Ascending aorta (tissue), 2 donors: ENCODE measurements at regions of chr3 and their contacts with region 1.

Region 1: DNA sequence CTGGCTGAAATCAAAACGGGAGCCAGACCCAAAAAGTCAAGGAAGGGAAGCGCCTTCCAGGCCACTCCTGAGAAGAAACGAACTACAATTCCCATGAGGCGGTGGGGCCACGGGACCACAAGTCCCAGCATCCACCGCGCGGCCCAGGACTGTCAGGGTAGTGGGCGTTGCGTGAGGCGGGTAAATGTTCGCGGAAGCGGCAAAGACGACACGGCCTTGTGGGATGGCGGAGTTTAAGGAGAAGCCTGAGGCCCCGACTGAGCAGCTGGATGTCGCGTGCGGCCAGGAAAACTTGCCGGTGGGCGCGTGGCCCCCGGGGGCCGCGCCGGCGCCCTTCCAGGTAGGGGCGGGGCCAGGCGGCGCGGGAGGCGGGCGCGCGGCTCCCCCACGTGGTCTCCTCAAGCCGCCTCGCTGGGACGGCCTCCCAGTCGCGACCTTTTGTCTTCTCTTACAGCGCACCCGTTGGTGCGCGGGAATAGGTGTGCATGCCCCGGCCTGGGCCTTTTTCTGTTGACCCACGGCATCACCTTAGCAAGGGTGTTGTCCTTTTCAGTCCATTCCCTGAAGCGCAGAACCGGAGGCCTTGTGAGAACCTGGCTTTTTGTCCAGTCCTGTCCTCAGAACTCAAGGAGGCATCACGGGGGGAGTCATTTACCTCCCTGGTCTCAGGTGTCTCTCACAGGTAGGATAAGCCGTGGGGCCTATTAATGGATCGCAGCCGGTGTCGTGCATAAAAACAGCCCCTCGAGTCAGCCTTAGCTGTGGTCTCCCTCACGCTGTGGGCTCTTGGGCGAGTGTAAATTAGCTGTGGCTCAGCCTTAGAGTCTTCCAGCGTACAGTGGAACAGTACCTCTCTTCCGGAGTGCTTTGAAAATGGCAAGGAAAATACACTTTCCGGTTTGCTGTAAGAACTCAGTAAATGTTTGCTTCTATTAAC is at the start of gene SETMAR:
- DNase-seq: peak; percentile 75 to 97
- H3K4me3 ChIP-seq: peak within 1 kb of the TSS; percentile 90 to 92
- H3K27ac ChIP-seq: peak within 1 kb of the TSS; percentile 91 to 96
- H3K4me1 ChIP-seq: peaks cover 8 to 42% of the 10 kb centered on the region in 2 donors
- H3K27me3 ChIP-seq: no peaks in the 10 kb centered on the region
- CTCF ChIP-seq: no peak
- total RNA-seq, gene SETMAR: 13.6 TPM

Region 2: GRCh38 chr3:3126477-3127431 is 1176.7 kb before region 1 on chr3 and contains the start of gene TRNT1:
- intact Hi-C with region 1: loop called (anchors 5 kb)
- DNase-seq: peak; percentile 78 to 97
- H3K4me3 ChIP-seq: peak within 1 kb of the TSS; percentile 90 to 97
- H3K27ac ChIP-seq: peak within 1 kb of the TSS; percentile 91 to 98
- H3K4me1 ChIP-seq: peaks cover 0 to 12% of the 10 kb centered on the region in 2 donors
- H3K27me3 ChIP-seq: no peaks in the 10 kb centered on the region
- CTCF ChIP-seq: no peak
- total RNA-seq, gene TRNT1: 16.4 TPM

Region 3: DNA sequence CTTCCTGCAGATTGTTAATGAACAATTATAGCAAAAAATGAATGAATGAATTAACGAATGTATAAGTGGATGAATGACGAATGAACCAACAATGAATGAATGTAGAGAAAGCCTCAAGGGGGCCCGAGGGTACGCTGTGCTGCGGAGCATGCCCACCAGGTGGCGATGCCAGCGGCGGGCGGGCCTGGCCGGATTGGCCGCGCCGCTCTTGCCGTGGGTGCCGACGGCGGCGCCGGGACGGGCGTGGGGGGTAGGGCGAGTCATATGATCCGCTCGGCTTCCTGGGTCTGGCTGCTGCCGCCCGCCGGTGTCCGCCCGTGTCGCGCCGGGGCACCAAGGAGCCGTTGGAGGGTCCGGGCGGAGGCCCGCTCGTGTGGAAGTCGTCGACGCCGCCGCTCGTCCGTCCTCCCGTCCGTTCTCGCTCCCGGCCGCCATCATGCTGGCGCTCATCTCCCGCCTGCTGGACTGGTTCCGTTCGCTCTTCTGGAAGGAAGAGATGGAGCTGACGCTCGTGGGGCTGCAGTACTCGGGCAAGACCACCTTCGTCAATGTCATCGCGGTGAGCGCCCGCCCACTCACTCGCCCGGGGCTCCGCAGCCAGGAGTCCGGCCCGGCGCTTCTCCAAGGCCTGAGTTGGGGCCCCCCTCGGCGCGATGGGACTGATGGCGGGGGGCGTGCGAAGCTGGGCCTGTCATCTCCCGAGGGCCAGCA is 818.7 kb after region 1 on chr3 and contains the start of gene ARL8B:
- intact Hi-C with region 1: loop called (anchors 5 kb)
- DNase-seq: peak; percentile 42 to 94
- H3K4me3 ChIP-seq: peak within 1 kb of the TSS; percentile 87 to 98
- H3K27ac ChIP-seq: peak within 1 kb of the TSS; percentile 92 to 93
- H3K4me1 ChIP-seq: peaks cover 0 to 25% of the 10 kb centered on the region in 2 donors
- H3K27me3 ChIP-seq: no peaks in the 10 kb centered on the region
- CTCF ChIP-seq: peak; percentile 94 to 96 (median 94)
- total RNA-seq, gene ARL8B: 6.4 TPM

Region 4: DNA sequence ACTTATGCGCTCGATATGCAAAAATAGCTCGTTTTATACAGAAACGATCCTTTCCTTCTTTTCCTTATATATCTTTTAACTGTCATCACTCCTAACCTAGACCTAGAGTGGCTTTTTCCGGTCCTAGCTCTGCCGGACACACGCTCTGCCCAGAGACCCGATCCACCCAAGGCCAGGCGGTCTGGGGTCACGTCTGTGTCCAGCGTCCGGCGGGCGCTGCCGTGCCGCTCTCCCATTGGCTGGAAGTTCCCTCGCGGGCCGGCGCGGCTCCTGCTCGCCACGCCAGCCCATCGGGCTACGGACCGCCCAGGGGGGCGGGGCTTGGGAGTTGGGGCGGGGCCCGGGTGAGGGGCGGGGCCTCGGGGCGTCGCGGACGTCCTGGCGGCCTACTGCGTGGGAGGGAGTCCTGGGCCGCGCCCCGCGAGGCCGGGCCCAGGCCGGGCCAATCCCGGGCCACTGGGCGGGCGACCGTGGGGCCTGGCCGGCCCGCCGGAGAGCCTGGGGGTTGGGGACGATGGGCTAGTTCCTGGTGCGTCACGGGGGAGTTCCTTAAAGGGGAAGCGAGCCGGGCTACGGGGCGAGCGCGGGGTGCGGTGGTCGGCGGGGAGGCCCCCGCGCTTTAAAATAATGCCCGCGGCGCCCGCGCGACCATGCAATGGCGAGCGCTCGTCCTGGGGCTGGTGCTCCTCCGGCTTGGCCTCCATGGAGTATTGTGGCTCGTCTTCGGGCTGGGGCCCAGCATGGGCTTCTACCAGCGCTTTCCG is 883.9 kb after region 1 on chr3 and contains the start of gene EDEM1:
- intact Hi-C with region 1: loop called (anchors 5 kb)
- DNase-seq: peak; percentile 85 to 97
- H3K4me3 ChIP-seq: peak within 1 kb of the TSS; percentile 77 to 84
- H3K27ac ChIP-seq: peak within 1 kb of the TSS; percentile 88 to 98
- H3K4me1 ChIP-seq: peaks cover 2 to 20% of the 10 kb centered on the region in 2 donors
- H3K27me3 ChIP-seq: no peaks in the 10 kb centered on the region
- CTCF ChIP-seq: no peak
- total RNA-seq, gene EDEM1: 27.2 TPM